Activated CD4-positive, alpha-beta memory T cell treated with anti-CD3 and anti-CD28 coated beads for 36 hours (primary cell): ENCODE measurements at regions of chr1 and their contacts with region 1.

Region 1: GRCh38 chr1:53889304-53890298 is at the start of gene YIPF1:
- DNase-seq: peak; percentile 93
- H3K4me3 Mint-ChIP-seq: peak within 1 kb of the TSS; percentile 96
- H3K27ac Mint-ChIP-seq: peak within 1 kb of the TSS; percentile 99
- H3K4me1 Mint-ChIP-seq: peaks cover 29% of the 10 kb centered on the region
- H3K27me3 Mint-ChIP-seq: no peaks in the 10 kb centered on the region
- total RNA-seq, gene YIPF1: 17.3 to 19.1 TPM

Region 2: DNA sequence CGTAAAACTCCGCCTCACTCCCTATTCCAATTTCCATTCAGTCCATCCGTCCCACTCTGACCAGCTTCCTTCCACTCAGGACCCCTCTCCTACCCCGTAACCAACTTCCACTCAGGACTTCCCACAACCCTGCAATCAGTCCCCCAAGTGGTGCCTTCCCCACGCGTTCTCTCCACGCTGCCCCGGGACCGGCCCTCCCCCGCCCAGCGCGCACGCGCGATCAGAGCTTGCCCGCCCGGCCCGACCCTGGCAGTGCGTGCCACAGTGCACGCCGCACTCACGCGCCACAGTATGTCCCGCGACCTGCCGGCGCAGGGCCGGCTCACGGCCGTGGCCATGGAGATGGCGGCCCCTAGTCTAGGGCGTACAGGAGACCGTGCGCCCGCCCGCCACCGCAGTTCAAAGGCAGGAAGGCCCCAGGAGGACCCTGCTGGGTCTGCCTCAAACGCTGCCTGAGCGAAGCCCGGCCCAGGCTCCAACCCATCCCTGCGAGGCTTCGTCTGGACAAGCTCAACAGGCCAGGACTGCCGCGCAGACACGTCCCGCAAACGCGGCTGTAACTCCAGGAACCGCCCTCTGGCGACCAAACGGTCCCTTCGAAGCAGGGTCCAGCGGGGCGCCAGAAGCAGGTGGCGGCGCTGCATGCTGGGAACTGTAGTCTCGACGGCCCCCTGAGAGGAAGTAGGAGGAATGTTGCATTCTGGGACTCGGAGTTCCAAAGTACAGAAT is 51.5 kb before region 1 on chr1 and contains the start of gene NDC1:
- CTCF ChIA-PET with region 1: no interaction called
- POLR2A ChIA-PET with region 1: no interaction called
- intact Hi-C with region 1: loop called (anchors 1 kb)
- DNase-seq: peak; percentile 91
- H3K4me3 Mint-ChIP-seq: peak within 1 kb of the TSS; percentile 90
- H3K27ac Mint-ChIP-seq: peak within 1 kb of the TSS; percentile 96
- H3K4me1 Mint-ChIP-seq: peaks cover 23% of the 10 kb centered on the region
- H3K27me3 Mint-ChIP-seq: peaks cover 2% of the 10 kb centered on the region
- total RNA-seq, gene NDC1: 29.6 to 32.0 TPM

Region 3: DNA sequence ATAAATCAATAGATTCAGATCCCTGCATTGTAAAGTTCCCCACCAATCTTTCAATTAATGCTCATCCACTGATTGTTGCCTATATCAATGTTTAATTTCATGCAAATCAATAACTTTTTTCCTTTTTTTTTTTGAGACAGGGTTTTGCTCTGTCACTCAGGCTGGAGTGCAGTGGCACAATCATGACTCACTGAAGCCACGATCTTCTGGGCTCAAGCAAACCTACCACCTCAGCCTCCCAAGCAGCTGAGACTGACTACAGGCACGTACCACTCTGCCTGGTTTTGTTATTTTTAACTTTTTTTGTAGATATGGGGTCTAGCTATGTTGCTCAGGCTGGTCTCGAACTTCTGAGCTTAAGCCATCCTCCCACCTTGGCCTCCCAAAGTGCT is 30.1 kb after region 1 on chr1:
- CTCF ChIA-PET with region 1: no interaction called
- POLR2A ChIA-PET with region 1: no interaction called
- intact Hi-C with region 1: loop called (anchors 1 kb)
- DNase-seq: peak; percentile 41
- H3K4me3 Mint-ChIP-seq: no peak overlapping the region
- H3K27ac Mint-ChIP-seq: peak overlapping the region; percentile 73
- H3K4me1 Mint-ChIP-seq: peaks cover 32% of the 10 kb centered on the region
- H3K27me3 Mint-ChIP-seq: no peaks in the 10 kb centered on the region